GM12878 (cell line): ENCODE measurements at regions of chr6 and their contacts with region 1.

Region 1: GRCh38 chr6:130575971-130576370 is 210.2 kb downstream of the TMEM200A start:
- DNase-seq: peak; percentile 87
- ATAC-seq: peak; percentile 99
- H3K4me3 ChIP-seq: no peak overlapping the region
- H3K27ac ChIP-seq: no peak overlapping the region
- H3K4me1 ChIP-seq: peaks cover 4% of the 10 kb centered on the region
- H3K27me3 ChIP-seq: no peaks in the 10 kb centered on the region
- CTCF ChIP-seq: no peak
- EP300 ChIP-seq: peak in 1 of 2 experiments; percentile 78; a peak in 2 of 4 replicates
- POLR2A ChIP-seq: no peak
- RAD21 ChIP-seq: 0 out of 2 replicates have a peak, but pooled peaks have one; percentile 4

Region 2: DNA sequence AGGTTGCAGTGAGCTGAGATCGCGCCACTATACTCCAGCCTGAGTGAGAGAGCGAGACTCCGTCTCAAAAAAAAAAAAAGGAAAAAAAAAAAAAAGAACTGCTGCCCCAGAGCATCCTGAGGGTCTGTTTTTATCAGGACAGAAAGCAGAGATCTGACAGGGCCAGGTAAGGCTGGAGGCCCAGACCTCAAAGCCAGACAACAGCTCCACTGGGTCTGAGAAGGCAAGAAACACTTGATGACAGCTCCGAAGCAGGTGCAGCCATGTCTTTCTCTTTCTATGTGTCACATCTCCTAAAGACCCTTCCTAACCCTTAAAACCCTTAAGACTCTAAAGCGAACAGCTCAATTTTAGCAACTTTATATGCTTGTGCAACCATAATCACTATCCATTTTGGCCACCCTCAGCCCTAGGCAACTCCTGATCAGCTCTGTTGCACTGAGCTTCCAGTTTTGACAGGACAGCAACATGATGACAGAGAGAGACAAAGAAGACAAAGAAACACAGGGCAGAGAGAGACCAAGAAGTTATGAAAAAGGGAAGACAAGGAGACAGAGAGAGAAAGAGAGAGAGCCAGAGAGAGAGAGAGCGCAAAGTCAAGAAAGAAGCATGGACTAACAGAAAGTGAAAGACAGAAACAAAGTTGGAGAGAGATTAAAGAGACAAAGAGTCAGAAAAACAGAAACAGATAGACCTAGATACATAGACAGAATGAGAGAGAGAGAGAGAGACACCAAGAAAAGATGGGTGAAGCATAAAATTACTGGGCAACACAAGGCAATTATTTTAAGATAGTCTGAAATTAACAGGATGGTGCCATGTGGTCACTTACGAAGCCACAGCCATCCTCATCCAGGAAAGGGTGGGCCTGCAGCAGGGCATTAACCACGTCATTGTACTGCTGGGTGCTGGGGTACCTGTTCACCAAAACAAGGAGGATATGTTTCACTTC is 392.4 kb before region 1 on chr6:
- CTCF ChIA-PET with region 1: no interaction called
- POLR2A ChIA-PET with region 1: no interaction called
- RAD21 ChIA-PET with region 1: no interaction called
- SMC1A ChIA-PET with region 1: no interaction called
- in situ Hi-C with region 1: no loop called
- intact Hi-C with region 1: no loop called
- DNase-seq: no peak
- ATAC-seq: peak; percentile 59; the same call in 2 of the 3 replicates
- H3K4me3 ChIP-seq: no peak overlapping the region; the same call in 1 of the 2 replicates
- H3K27ac ChIP-seq: no peak overlapping the region
- H3K4me1 ChIP-seq: no peaks in the 10 kb centered on the region
- H3K27me3 ChIP-seq: no peaks in the 10 kb centered on the region
- CTCF ChIP-seq: no peak
- EP300 ChIP-seq: no peak
- POLR2A ChIP-seq: no peak
- RAD21 ChIP-seq: no peak

Region 3: GRCh38 chr6:130259557-130259956 is 316.4 kb before region 1 on chr6:
- CTCF ChIA-PET with region 1: no interaction called
- POLR2A ChIA-PET with region 1: no interaction called
- RAD21 ChIA-PET with region 1: no interaction called
- SMC1A ChIA-PET with region 1: no interaction called
- in situ Hi-C with region 1: no loop called
- intact Hi-C with region 1: loop called (anchors 2 kb)
- DNase-seq: no peak
- ATAC-seq: peak; percentile 26
- H3K4me3 ChIP-seq: no peak overlapping the region
- H3K27ac ChIP-seq: peak overlapping the region; percentile 74
- H3K4me1 ChIP-seq: peaks cover 13% of the 10 kb centered on the region
- H3K27me3 ChIP-seq: no peaks in the 10 kb centered on the region
- CTCF ChIP-seq: no peak
- EP300 ChIP-seq: no peak
- POLR2A ChIP-seq: no peak
- RAD21 ChIP-seq: no peak

Region 4: GRCh38 chr6:130525408-130525807 is 50.6 kb before region 1 on chr6:
- CTCF ChIA-PET with region 1: interaction called, 5 read pairs
- POLR2A ChIA-PET with region 1: interaction called, 3 read pairs
- RAD21 ChIA-PET with region 1: interaction called, 15 read pairs
- SMC1A ChIA-PET with region 1: interaction called, 14 read pairs
- in situ Hi-C with region 1: no loop called
- intact Hi-C with region 1: no loop called
- DNase-seq: no peak
- ATAC-seq: peak; percentile 64
- H3K4me3 ChIP-seq: no peak overlapping the region
- H3K27ac ChIP-seq: no peak overlapping the region
- H3K4me1 ChIP-seq: peaks cover 2% of the 10 kb centered on the region; the same call in 1 of the 2 replicates
- H3K27me3 ChIP-seq: no peaks in the 10 kb centered on the region
- CTCF ChIP-seq: no peak
- EP300 ChIP-seq: no peak
- POLR2A ChIP-seq: no peak
- RAD21 ChIP-seq: peak; percentile 24; the same call in 1 of the 2 replicates

Region 5: GRCh38 chr6:130565696-130566095 is 10.3 kb before region 1 on chr6:
- CTCF ChIA-PET with region 1: interaction called, 10 read pairs
- POLR2A ChIA-PET with region 1: interaction called, 14 read pairs
- RAD21 ChIA-PET with region 1: interaction called, 15 read pairs
- SMC1A ChIA-PET with region 1: interaction called, 53 read pairs
- in situ Hi-C with region 1: no loop called
- intact Hi-C with region 1: no loop called
- DNase-seq: no peak
- ATAC-seq: no peak
- H3K4me3 ChIP-seq: no peak overlapping the region
- H3K27ac ChIP-seq: no peak overlapping the region
- H3K4me1 ChIP-seq: no peaks in the 10 kb centered on the region
- H3K27me3 ChIP-seq: no peaks in the 10 kb centered on the region
- CTCF ChIP-seq: no peak
- EP300 ChIP-seq: no peak
- POLR2A ChIP-seq: no peak
- RAD21 ChIP-seq: no peak

Region 6: GRCh38 chr6:130620338-130620781 is 44.4 kb after region 1 on chr6:
- CTCF ChIA-PET with region 1: no interaction called
- POLR2A ChIA-PET with region 1: interaction called, 5 read pairs
- RAD21 ChIA-PET with region 1: interaction called, 17 read pairs
- SMC1A ChIA-PET with region 1: interaction called, 20 read pairs
- in situ Hi-C with region 1: no loop called
- intact Hi-C with region 1: no loop called
- DNase-seq: no peak
- ATAC-seq: peak; percentile 47
- H3K4me3 ChIP-seq: no peak overlapping the region
- H3K27ac ChIP-seq: no peak overlapping the region
- H3K4me1 ChIP-seq: peaks cover 3% of the 10 kb centered on the region; the same call in 1 of the 2 replicates
- H3K27me3 ChIP-seq: no peaks in the 10 kb centered on the region
- CTCF ChIP-seq: no peak
- EP300 ChIP-seq: no peak
- POLR2A ChIP-seq: no peak
- RAD21 ChIP-seq: no peak

Region 7: DNA sequence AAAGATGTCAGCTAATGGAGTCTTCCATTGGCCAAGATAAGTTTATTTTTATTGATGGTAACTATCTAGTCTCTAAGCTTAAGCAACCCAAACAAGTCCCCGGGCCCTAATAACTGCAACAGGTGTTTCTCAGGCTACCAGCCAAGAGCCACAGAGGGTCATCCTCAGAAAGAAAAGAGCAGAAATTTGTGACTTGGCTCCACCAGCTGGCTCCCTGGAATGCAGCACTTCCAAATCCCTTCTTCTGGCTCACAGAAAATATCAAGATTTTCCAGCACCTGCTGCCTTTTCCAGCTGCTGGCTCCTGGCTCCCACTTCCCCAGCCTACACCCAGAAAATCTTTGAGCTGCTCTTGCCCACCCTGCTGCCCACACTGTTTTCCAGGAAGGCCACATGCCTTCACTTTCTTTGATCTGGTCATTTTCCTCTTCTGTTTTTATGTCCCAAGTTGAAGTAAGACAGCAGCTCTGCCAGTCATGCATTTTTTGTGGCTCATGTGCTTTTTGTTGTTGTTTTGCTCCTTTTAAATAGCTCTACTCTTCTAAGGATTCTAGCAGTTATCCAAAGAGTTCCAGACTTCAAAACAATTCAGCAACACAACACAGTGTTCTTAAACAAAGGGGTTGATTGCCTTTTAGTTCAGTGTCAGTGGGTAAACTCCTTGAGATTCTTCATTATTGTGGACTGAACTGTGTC is 100.3 kb after region 1 on chr6:
- CTCF ChIA-PET with region 1: no interaction called
- POLR2A ChIA-PET with region 1: no interaction called
- RAD21 ChIA-PET with region 1: no interaction called
- SMC1A ChIA-PET with region 1: interaction called, 12 read pairs
- in situ Hi-C with region 1: no loop called
- intact Hi-C with region 1: no loop called
- DNase-seq: no peak
- ATAC-seq: no peak; the same call in 2 of the 3 replicates
- H3K4me3 ChIP-seq: no peak overlapping the region
- H3K27ac ChIP-seq: no peak overlapping the region
- H3K4me1 ChIP-seq: no peaks in the 10 kb centered on the region; the same call in 1 of the 2 replicates
- H3K27me3 ChIP-seq: no peaks in the 10 kb centered on the region
- CTCF ChIP-seq: peak in 1 of 3 experiments; percentile 31; a peak in 2 of 6 replicates
- EP300 ChIP-seq: no peak
- POLR2A ChIP-seq: no peak
- RAD21 ChIP-seq: peak; percentile 40; the same call in 1 of the 2 replicates